ENCODE measurements at regions of chr10 and their contacts with region 1.

Region 1: DNA sequence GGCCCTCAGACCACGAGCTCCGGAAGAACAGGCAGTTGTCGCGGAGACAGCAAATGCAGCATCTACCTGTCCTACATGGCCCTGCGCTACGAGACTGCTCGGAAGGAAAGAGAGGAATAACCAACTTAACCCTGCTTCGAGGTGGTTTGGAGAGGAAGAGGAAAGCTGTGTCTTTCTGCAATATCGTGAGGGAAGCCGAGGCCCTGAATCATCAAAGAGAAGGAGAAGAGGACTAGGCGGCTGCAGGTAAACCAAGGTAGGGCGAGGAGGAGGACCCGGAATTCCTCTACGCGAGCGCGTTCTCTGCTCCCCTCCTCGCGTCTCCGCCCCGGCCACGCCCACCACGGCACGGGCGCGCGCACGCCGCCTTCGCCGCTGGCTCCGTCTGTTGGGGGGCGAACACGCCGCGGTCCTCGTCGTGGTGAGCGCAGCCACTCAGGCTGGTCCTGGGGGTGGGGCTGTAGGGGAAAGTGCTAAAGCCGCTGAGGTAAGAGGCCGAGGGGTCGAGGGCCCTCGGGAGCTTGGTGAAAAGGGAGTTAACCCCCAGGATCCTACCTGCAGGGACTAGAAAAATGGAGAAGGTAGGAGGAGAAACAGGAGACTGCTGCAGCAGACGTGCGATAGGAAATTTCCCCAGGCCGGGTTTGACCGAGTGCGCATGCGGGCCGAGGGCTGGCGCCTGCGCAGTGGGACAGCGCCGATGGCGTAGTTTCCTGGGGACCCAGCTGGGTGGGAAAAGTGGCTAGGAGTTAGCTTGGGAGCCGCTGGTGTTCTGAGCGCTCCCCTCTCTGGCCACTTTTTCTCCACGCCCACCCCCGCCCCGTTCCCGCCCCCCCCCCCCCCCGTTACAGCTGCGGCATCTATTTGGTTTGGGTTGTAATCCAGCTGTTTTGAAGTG is at the starts of genes ANAPC16 and ASCC1:
- DNase-seq: peak; percentile 86 to 97 (median 94)
- ATAC-seq: peak; percentile 79
- H3K4me3 ChIP-seq: peak within 1 kb of the TSS; percentile 83
- H3K4me3 Mint-ChIP-seq: peak within 1 kb of the TSS; percentile 97
- H3K27ac ChIP-seq: peak within 1 kb of the TSS; percentile 89 to 98
- H3K27ac Mint-ChIP-seq: peak within 1 kb of the TSS; percentile 94
- H3K4me1 ChIP-seq: peaks cover 62% of the 10 kb centered on the region
- H3K4me1 Mint-ChIP-seq: peaks cover 50% of the 10 kb centered on the region
- H3K27me3 ChIP-seq: no peaks in the 10 kb centered on the region
- H3K27me3 Mint-ChIP-seq: no peaks in the 10 kb centered on the region
- CTCF ChIP-seq: no peak
- total RNA-seq, gene ANAPC16: 61.9 to 64.3 TPM
- total RNA-seq, gene ASCC1: 16.5 to 19.0 TPM

Region 2: GRCh38 chr10:72061491-72061890 is 154.4 kb before region 1 on chr10:
- CTCF ChIA-PET with region 1: no interaction called
- POLR2A ChIA-PET with region 1: interaction called, 13 read pairs
- intact Hi-C with region 1: no loop called
- DNase-seq: peak in 1 of 14 experiments; percentile 39
- ATAC-seq: peak; percentile 18
- H3K4me3 ChIP-seq: no peak overlapping the region
- H3K4me3 Mint-ChIP-seq: peak overlapping the region; percentile 79
- H3K27ac ChIP-seq: no peak overlapping the region
- H3K27ac Mint-ChIP-seq: peak overlapping the region; percentile 95
- H3K4me1 ChIP-seq: peaks cover 10% of the 10 kb centered on the region
- H3K4me1 Mint-ChIP-seq: peaks cover 47% of the 10 kb centered on the region
- H3K27me3 ChIP-seq: no peaks in the 10 kb centered on the region
- H3K27me3 Mint-ChIP-seq: peaks cover 25% of the 10 kb centered on the region
- CTCF ChIP-seq: no peak

Region 3: DNA sequence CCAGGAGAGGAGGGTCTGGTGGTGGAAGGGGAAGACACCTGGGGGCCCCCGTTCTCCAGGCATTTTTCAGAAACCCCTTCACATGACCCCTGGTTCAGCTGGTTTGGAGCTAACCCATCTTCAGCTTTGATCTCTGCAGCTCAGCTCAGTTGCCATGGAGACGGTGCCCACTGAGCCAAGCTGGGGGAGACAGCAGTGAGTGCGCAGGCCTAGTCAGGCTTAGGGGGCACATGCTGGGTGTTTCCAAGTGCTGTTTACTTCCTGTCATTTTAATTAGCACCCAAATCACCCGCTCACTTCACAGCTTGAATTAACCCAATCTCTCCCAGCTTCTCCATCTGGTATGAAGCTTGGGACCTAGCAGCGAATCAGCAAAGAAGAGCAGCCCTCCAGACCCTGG is 136.5 kb before region 1 on chr10:
- CTCF ChIA-PET with region 1: no interaction called
- POLR2A ChIA-PET with region 1: interaction called, 23 read pairs
- intact Hi-C with region 1: loop called in 1 of 2 experiments (anchors 5 kb)
- DNase-seq: peak in 12 of 14 experiments; percentile 44 to 89 (median 68)
- ATAC-seq: peak; percentile 38
- H3K4me3 ChIP-seq: peak overlapping the region; percentile 28
- H3K4me3 Mint-ChIP-seq: peak overlapping the region; percentile 78
- H3K27ac ChIP-seq: peak overlapping the region; percentile 46 to 96
- H3K27ac Mint-ChIP-seq: peak overlapping the region; percentile 98
- H3K4me1 ChIP-seq: peaks cover 100% of the 10 kb centered on the region
- H3K4me1 Mint-ChIP-seq: peaks cover 93% of the 10 kb centered on the region
- H3K27me3 ChIP-seq: no peaks in the 10 kb centered on the region
- H3K27me3 Mint-ChIP-seq: no peaks in the 10 kb centered on the region
- CTCF ChIP-seq: no peak

Region 4: DNA sequence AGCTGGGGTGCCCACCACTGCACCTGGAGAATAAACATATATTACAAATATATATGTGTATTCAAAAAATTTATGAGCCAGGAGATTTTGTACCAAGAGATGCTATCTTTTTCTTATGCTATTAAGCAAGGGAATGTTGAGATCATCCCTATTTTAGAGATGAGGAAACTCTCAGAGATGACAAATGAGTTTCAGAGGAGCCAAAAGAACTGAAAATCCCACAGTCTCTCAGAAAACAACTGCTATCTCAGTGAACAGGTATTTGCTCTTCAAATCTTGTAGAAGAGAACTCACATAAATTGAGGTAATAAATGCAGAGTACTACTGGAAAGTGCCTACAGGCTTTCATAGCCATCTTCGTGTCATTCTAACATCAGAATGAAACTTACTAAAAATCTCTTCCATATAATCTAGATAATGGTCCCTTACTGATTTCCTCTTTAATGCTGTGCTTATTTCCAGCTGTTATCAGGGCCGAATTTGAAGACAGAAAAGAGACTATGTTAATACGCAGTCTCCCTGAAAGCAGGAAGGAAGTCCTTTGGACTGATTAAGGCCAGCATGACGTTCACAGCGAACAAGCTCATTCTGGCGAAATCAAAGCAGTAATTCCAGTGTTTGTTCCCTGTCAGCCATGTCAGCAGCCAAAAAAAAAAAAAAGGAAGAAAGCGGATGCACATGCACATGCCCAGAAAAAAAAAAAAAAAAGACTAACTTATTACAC is 29.5 kb before region 1 on chr10:
- CTCF ChIA-PET with region 1: no interaction called
- POLR2A ChIA-PET with region 1: no interaction called
- intact Hi-C with region 1: no loop called
- DNase-seq: peak in 2 of 14 experiments; percentile 27 to 32
- ATAC-seq: no peak
- H3K4me3 ChIP-seq: no peak overlapping the region
- H3K4me3 Mint-ChIP-seq: no peak overlapping the region
- H3K27ac ChIP-seq: no peak overlapping the region
- H3K27ac Mint-ChIP-seq: no peak overlapping the region
- H3K4me1 ChIP-seq: no peaks in the 10 kb centered on the region
- H3K4me1 Mint-ChIP-seq: peaks cover 7% of the 10 kb centered on the region
- H3K27me3 ChIP-seq: no peaks in the 10 kb centered on the region
- H3K27me3 Mint-ChIP-seq: no peaks in the 10 kb centered on the region
- CTCF ChIP-seq: no peak

Region 5: DNA sequence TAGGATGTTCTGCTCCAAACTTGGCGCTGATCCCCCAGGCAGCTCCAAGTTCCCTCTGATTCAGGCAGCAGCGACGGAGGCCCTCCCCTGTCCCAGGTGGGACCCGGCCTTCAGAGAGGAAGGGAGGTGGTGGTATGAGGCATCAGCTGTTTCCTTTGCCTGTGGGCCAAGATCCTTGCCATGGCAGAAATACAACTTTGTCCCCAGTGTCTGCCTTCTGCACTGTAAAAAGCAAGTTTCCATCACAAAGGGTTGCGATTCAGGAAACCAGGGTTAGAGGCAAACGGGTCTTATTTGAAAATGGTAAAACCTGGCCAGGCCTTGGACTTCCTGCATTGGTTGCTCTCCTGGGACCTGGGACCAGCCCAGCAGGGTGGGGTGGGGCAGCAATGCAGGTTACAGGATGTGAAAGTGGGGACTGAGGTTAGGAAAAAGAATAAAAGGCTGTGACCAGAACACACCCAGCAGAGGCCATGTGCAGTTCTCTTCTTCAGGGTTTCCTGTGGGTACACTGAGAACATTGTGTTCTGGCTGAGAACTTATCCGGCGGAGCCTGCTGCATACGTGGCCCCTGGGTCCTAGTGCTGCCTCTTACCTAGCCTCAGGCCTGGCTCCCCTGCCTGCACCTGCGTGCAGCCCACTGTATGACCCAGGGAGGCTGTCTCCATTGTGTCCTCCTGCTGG is 32.7 kb after region 1 on chr10:
- CTCF ChIA-PET with region 1: no interaction called
- POLR2A ChIA-PET with region 1: interaction called, 16 read pairs
- intact Hi-C with region 1: no loop called
- DNase-seq: peak; percentile 54 to 96 (median 64)
- ATAC-seq: peak; percentile 87
- H3K4me3 ChIP-seq: peak overlapping the region; percentile 31
- H3K4me3 Mint-ChIP-seq: peak overlapping the region; percentile 85
- H3K27ac ChIP-seq: peak overlapping the region; percentile 20 to 62
- H3K27ac Mint-ChIP-seq: peak overlapping the region; percentile 96
- H3K4me1 ChIP-seq: peaks cover 99% of the 10 kb centered on the region
- H3K4me1 Mint-ChIP-seq: peaks cover 86% of the 10 kb centered on the region
- H3K27me3 ChIP-seq: no peaks in the 10 kb centered on the region
- H3K27me3 Mint-ChIP-seq: no peaks in the 10 kb centered on the region
- CTCF ChIP-seq: no peak

Region 6: DNA sequence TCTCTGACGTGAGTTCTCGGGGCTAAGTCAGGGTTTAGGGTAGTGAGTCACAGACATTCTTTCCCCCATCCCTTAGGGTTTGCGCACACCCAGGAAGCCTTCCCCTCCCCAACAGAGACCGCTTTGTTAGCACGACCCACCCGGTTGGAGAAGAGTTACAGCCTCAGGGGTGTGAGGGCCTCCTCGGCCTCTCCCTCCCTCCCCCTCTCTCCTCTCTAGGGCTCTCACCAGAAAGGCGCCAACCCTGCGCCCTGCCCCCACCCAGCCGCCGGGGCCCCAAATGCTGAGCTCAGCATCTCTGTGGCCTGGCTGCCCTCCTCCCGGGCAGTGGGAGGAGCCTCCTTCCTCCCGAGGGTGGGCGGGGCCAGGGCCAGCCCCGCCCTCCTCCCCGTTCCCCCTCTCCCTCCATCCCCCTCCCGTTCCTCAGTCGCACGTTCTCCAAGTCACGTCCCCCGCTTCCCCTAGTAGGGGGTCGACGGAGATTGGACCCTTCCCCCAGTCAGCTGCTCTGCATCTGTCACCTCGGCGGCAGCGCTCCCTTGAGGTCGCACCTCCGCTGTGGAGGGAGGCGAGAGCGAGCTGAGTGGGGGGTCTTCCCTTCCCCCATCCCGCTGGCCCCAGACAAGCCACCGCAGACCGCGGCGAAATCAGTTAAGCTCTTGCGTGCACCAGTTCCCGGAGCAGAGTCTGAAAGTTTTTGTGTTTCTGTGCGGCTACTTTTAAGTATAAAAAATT is 44.9 kb after region 1 on chr10:
- CTCF ChIA-PET with region 1: no interaction called
- POLR2A ChIA-PET with region 1: interaction called, 8 read pairs
- intact Hi-C with region 1: loop called in 1 of 2 experiments (anchors 5 kb)
- DNase-seq: peak; percentile 64 to 91 (median 77)
- ATAC-seq: peak; percentile 76
- H3K4me3 ChIP-seq: peak overlapping the region; percentile 77
- H3K4me3 Mint-ChIP-seq: peak overlapping the region; percentile 84
- H3K27ac ChIP-seq: peak overlapping the region; percentile 68 to 80
- H3K27ac Mint-ChIP-seq: peak overlapping the region; percentile 85
- H3K4me1 ChIP-seq: peaks cover 80% of the 10 kb centered on the region
- H3K4me1 Mint-ChIP-seq: peaks cover 72% of the 10 kb centered on the region
- H3K27me3 ChIP-seq: no peaks in the 10 kb centered on the region
- H3K27me3 Mint-ChIP-seq: no peaks in the 10 kb centered on the region
- CTCF ChIP-seq: no peak

Region 7: GRCh38 chr10:72319416-72320254 is 103.7 kb after region 1 on chr10:
- CTCF ChIA-PET with region 1: no interaction called
- POLR2A ChIA-PET with region 1: interaction called, 25 read pairs
- intact Hi-C with region 1: no loop called
- DNase-seq: peak; percentile 77 to 95 (median 88)
- ATAC-seq: peak; percentile 65
- H3K4me3 ChIP-seq: peak overlapping the region; percentile 52
- H3K4me3 Mint-ChIP-seq: peak overlapping the region; percentile 57
- H3K27ac ChIP-seq: peak overlapping the region; percentile 86 to 95
- H3K27ac Mint-ChIP-seq: peak overlapping the region; percentile 91
- H3K4me1 ChIP-seq: peaks cover 93% of the 10 kb centered on the region
- H3K4me1 Mint-ChIP-seq: peaks cover 89% of the 10 kb centered on the region
- H3K27me3 ChIP-seq: no peaks in the 10 kb centered on the region
- H3K27me3 Mint-ChIP-seq: no peaks in the 10 kb centered on the region
- CTCF ChIP-seq: no peak

Region 8: GRCh38 chr10:73785221-73785720 is 1569.4 kb after region 1 on chr10 and contains the start of gene ZSWIM8:
- CTCF ChIA-PET with region 1: no interaction called
- POLR2A ChIA-PET with region 1: no interaction called
- intact Hi-C with region 1: loop called in 1 of 2 experiments (anchors 5 kb)
- DNase-seq: peak; percentile 69 to 95 (median 82)
- ATAC-seq: peak; percentile 83
- H3K4me3 ChIP-seq: peak within 1 kb of the TSS; percentile 94
- H3K4me3 Mint-ChIP-seq: peak within 1 kb of the TSS; percentile 98
- H3K27ac ChIP-seq: peak within 1 kb of the TSS; percentile 80
- H3K27ac Mint-ChIP-seq: peak within 1 kb of the TSS; percentile 96
- H3K4me1 ChIP-seq: peaks cover 38% of the 10 kb centered on the region
- H3K4me1 Mint-ChIP-seq: peaks cover 61% of the 10 kb centered on the region
- H3K27me3 ChIP-seq: no peaks in the 10 kb centered on the region
- H3K27me3 Mint-ChIP-seq: no peaks in the 10 kb centered on the region
- CTCF ChIP-seq: no peak
- total RNA-seq, gene ZSWIM8: 66.4 to 70.7 TPM

Measured in CD4-positive, alpha-beta T cell (primary cell).